Caki2 (cell line): ENCODE measurements at regions of chr4 and their contacts with region 1.

Region 1: GRCh38 chr4:26441102-26441501 is 49.2 kb downstream of the CCKAR start:
- DNase-seq: no peak

Region 2: DNA sequence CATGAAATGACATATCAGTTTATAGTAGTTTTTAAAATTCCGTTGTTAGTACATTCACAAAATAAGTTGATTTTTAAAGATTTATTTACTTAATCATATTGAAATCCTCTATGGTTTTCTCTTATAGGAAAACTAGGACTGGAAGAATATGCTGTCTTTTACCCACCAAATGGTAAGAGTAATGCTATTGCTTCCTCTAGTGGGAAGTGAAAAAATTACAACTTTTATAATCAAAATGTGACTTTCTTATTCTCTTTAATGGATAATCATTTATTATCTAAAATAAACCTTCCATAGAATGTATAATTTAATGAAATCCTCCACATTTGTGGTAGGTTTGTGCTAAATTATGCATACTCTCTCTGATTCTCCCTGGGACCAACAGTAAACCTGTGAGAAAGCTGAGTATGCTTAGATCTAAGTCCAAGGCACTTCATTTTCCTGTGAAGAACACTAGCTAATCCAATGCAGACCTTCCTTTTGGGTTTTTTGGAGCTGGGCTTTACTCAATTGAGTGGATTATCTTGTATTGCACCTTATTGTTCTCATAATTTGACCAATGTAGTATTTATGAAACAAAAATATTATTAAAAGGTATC is 279.0 kb after region 1 on chr4:
- in situ Hi-C with region 1: loop called (anchors 25 kb)
- DNase-seq: peak; percentile 18